Naive thymus-derived CD4-positive, alpha-beta T cell (primary cell): ENCODE measurements at regions of chr13 and their contacts with region 1.

Region 1: GRCh38 chr13:44917589-44918325 is 71.5 kb downstream of the NUFIP1 start:
- DNase-seq: peak; percentile 95 to 98 (median 97)
- ATAC-seq: peak; percentile 85
- H3K4me3 ChIP-seq: peak overlapping the region; percentile 89
- H3K4me3 Mint-ChIP-seq: no peak overlapping the region
- H3K27ac ChIP-seq: peak overlapping the region; percentile 75
- H3K27ac Mint-ChIP-seq: no peak overlapping the region
- H3K4me1 ChIP-seq: peaks cover 5 to 9% of the 10 kb centered on the region in 2 donors
- H3K4me1 Mint-ChIP-seq: peaks cover 2 to 19% (median 7%) of the 10 kb centered on the region in 7 donors
- H3K27me3 ChIP-seq: no peaks in the 10 kb centered on the region
- H3K27me3 Mint-ChIP-seq: peaks cover 0 to 4% (median 0%) of the 10 kb centered on the region in 5 donors

Region 2: DNA sequence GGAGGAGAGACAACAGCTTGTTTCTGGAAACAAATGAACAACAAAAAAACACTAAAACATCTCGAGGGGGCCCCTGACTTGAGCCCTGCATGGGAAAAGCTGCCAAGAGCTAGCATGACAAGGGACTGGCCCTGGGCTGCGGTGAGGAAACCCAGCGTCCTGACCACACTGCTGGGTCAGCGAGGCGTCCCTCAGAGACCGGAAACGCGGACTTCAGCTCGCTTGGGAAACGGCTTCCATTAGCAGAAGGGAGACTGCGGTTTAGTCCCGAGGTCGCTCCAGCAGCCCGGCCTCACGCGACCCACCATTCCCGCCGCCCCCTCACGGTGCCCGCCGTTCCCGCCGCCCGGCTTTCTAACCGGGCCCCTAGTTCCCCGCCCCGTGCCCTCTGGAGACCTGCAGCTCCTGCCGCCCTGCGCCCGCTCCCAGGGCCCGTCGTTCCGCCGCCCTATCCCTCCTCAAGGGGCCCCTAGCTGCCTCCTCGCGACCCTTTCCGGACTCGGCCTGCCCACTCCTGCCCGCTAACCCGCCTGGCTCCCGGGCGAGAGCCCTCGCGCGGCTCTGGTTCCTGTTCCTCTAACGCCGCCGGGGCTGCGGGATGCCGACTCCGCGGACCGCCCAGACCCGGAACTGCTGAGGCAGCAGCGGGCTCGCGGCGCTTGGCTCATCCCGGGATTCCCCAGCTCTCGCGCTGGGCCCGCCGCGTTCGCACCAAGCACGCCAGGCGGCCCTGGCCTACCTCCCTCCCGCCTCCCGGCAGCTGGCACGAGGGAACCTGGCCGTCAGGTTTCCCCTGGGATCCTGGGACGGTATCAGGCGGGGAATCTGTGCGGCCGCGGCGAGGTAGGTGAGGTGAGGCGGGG is 1038.6 kb before region 1 on chr13 and contains the start of gene CCDC122:
- CTCF ChIA-PET with region 1: no interaction called
- POLR2A ChIA-PET with region 1: no interaction called
- intact Hi-C with region 1: loop called (anchors 2 to 5 kb)
- DNase-seq: peak; percentile 44 to 81 (median 65)
- ATAC-seq: peak; percentile 91
- H3K4me3 ChIP-seq: peak within 1 kb of the TSS; percentile 60
- H3K4me3 Mint-ChIP-seq: peak within 1 kb of the TSS; percentile 82 to 93 (median 90)
- H3K27ac ChIP-seq: peak within 1 kb of the TSS; percentile 72
- H3K27ac Mint-ChIP-seq: peak within 1 kb of the TSS; percentile 53 to 90 (median 81)
- H3K4me1 ChIP-seq: peaks cover 0 to 9% of the 10 kb centered on the region in 2 donors
- H3K4me1 Mint-ChIP-seq: peaks cover 15 to 27% (median 23%) of the 10 kb centered on the region in 7 donors
- H3K27me3 ChIP-seq: no peaks in the 10 kb centered on the region
- H3K27me3 Mint-ChIP-seq: peaks cover 0 to 33% (median 3%) of the 10 kb centered on the region in 5 donors
- total RNA-seq, gene CCDC122: 1.1 to 2.3 (median 1.4) TPM

Region 3: DNA sequence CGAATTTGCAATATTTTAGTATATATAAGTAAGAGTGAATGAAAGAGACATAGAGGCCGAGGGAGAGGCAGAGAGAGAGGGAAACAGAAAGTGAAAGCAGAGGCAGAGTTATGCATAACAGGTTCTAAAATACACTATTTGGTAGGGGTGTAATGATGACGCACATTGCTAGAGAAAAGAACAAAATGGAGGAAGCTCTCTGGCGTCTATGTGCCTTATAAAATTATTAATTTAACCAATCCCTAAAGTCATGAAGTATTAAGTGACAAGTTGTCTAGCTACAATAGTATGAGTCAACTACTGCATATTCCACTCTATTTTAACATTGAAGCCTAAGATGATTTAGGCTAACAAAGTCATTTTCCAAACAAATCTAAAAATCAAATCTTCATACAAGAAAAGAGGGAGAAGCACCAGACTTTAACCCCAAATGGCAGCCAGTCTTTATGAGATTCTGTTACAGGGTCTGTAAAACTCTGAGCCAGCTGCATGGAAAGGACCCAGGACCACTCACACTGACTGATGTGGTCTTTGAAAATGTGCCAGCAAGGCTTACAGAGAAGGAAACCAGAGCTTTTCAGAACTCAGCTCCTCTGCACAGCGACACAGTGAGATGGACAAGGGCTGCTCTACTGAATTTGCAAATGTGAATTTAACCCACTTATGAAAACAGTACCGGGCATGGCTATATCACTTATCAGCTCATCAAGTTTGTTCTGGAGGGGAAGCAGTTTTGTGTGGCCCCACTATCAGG is 643.1 kb before region 1 on chr13:
- CTCF ChIA-PET with region 1: interaction called, 5 read pairs
- POLR2A ChIA-PET with region 1: interaction called, 3 read pairs
- intact Hi-C with region 1: loop called (anchors 1 to 2 kb)
- DNase-seq: peak in 7 of 9 donors; percentile 69 to 85 (median 82)
- ATAC-seq: peak; percentile 96
- H3K4me3 ChIP-seq: peak overlapping the region; percentile 49
- H3K4me3 Mint-ChIP-seq: peak overlapping the region; percentile 66 to 81 (median 78)
- H3K27ac ChIP-seq: peak overlapping the region; percentile 73
- H3K27ac Mint-ChIP-seq: peak overlapping the region; percentile 90 to 99 (median 96)
- H3K4me1 ChIP-seq: peaks cover 15 to 26% of the 10 kb centered on the region in 2 donors
- H3K4me1 Mint-ChIP-seq: peaks cover 18 to 71% (median 51%) of the 10 kb centered on the region in 7 donors
- H3K27me3 ChIP-seq: no peaks in the 10 kb centered on the region
- H3K27me3 Mint-ChIP-seq: no peaks in the 10 kb centered on the region

Region 4: GRCh38 chr13:44768239-44768638 is 149.5 kb before region 1 on chr13:
- CTCF ChIA-PET with region 1: no interaction called
- POLR2A ChIA-PET with region 1: no interaction called
- intact Hi-C with region 1: loop called in 1 of 2 experiments (anchors 2 kb)
- DNase-seq: peak in 3 of 9 donors; percentile 5 to 30 (median 23)
- ATAC-seq: peak; percentile 74
- H3K4me3 ChIP-seq: no peak overlapping the region
- H3K4me3 Mint-ChIP-seq: peak overlapping the region in 3 of 10 donors; percentile 2 to 60 (median 27)
- H3K27ac ChIP-seq: no peak overlapping the region
- H3K27ac Mint-ChIP-seq: peak overlapping the region in 4 of 9 donors; percentile 1 to 83 (median 15)
- H3K4me1 ChIP-seq: peaks cover 0 to 4% of the 10 kb centered on the region in 2 donors
- H3K4me1 Mint-ChIP-seq: peaks cover 12 to 39% (median 16%) of the 10 kb centered on the region in 7 donors
- H3K27me3 ChIP-seq: no peaks in the 10 kb centered on the region
- H3K27me3 Mint-ChIP-seq: peaks cover 0 to 9% (median 0%) of the 10 kb centered on the region in 5 donors

Region 5: GRCh38 chr13:45119991-45120864 is 202.5 kb after region 1 on chr13 and contains the start of gene GTF2F2:
- CTCF ChIA-PET with region 1: no interaction called
- POLR2A ChIA-PET with region 1: no interaction called
- intact Hi-C with region 1: loop called (anchors 1 kb)
- DNase-seq: peak; percentile 81 to 89 (median 86)
- ATAC-seq: peak; percentile 80
- H3K4me3 ChIP-seq: peak within 1 kb of the TSS; percentile 80
- H3K4me3 Mint-ChIP-seq: no peak within 1 kb of the TSS
- H3K27ac ChIP-seq: peak within 1 kb of the TSS; percentile 91
- H3K27ac Mint-ChIP-seq: no peak within 1 kb of the TSS
- H3K4me1 ChIP-seq: peaks cover 16 to 21% of the 10 kb centered on the region in 2 donors
- H3K4me1 Mint-ChIP-seq: peaks cover 6 to 17% (median 13%) of the 10 kb centered on the region in 7 donors
- H3K27me3 ChIP-seq: no peaks in the 10 kb centered on the region
- H3K27me3 Mint-ChIP-seq: no peaks in the 10 kb centered on the region
- total RNA-seq, gene GTF2F2: 13.7 to 20.4 (median 15.2) TPM

Region 6: GRCh38 chr13:45406421-45406820 is 488.7 kb after region 1 on chr13:
- CTCF ChIA-PET with region 1: no interaction called
- POLR2A ChIA-PET with region 1: no interaction called
- intact Hi-C with region 1: no loop called
- DNase-seq: no peak
- ATAC-seq: no peak
- H3K4me3 ChIP-seq: no peak overlapping the region
- H3K4me3 Mint-ChIP-seq: no peak overlapping the region
- H3K27ac ChIP-seq: no peak overlapping the region
- H3K27ac Mint-ChIP-seq: peak overlapping the region in 6 of 9 donors; percentile 32 to 77 (median 54)
- H3K4me1 ChIP-seq: no peaks in the 10 kb centered on the region
- H3K4me1 Mint-ChIP-seq: peaks cover 6 to 21% (median 12%) of the 10 kb centered on the region in 7 donors
- H3K27me3 ChIP-seq: no peaks in the 10 kb centered on the region
- H3K27me3 Mint-ChIP-seq: no peaks in the 10 kb centered on the region

Region 7: DNA sequence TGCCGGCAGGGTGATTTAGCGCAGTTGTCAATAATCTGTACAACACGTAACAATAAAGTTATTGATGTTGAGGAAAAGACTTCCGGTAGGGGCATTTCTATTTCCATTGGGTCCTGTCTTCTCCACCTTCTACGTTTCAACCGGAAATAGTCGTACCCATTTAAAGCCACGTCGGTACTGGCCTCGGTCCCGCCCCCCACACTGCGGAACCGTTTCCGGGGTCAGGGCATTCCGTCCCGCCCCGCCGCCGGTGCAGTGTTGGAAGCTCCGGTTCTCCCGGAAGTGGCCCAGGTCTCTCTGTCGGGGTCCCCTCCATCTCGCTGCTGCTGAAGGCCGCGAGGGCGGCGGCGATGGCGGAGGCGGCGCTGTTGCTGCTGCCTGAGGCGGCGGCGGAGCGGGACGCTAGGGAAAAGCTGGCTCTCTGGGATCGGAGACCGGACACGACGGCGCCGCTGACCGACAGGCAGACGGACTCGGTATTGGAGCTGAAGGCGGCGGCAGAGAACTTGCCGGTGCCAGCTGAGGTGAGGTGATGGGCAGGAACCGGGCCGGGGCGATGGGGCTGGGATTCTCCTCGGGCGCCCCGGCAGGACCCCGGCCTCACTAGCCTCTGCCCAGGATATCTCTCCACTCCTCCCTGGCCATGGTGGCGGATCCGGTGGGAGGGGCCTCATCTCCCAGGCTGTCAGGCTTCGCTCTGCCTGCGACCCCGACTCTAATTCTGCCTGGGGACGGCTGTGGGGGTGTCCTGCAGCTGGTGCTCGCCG is 547.1 kb after region 1 on chr13 and contains the start of gene COG3:
- CTCF ChIA-PET with region 1: no interaction called
- POLR2A ChIA-PET with region 1: no interaction called
- intact Hi-C with region 1: loop called in 1 of 2 experiments (anchors 1 kb)
- DNase-seq: peak; percentile 87 to 97 (median 96)
- ATAC-seq: peak; percentile 98
- H3K4me3 ChIP-seq: peak within 1 kb of the TSS; percentile 49
- H3K4me3 Mint-ChIP-seq: peak within 1 kb of the TSS; percentile 90 to 97 (median 95)
- H3K27ac ChIP-seq: peak within 1 kb of the TSS; percentile 92
- H3K27ac Mint-ChIP-seq: peak within 1 kb of the TSS; percentile 81 to 98 (median 94)
- H3K4me1 ChIP-seq: peaks cover 10 to 28% of the 10 kb centered on the region in 2 donors
- H3K4me1 Mint-ChIP-seq: peaks cover 33 to 74% (median 59%) of the 10 kb centered on the region in 7 donors
- H3K27me3 ChIP-seq: no peaks in the 10 kb centered on the region
- H3K27me3 Mint-ChIP-seq: no peaks in the 10 kb centered on the region
- total RNA-seq, gene COG3: 29.7 to 50.1 (median 43.4) TPM

Region 8: GRCh38 chr13:45974500-45974899 is 1056.7 kb after region 1 on chr13:
- CTCF ChIA-PET with region 1: no interaction called
- POLR2A ChIA-PET with region 1: no interaction called
- intact Hi-C with region 1: no loop called
- DNase-seq: no peak
- ATAC-seq: no peak
- H3K4me3 ChIP-seq: no peak overlapping the region
- H3K4me3 Mint-ChIP-seq: no peak overlapping the region
- H3K27ac ChIP-seq: no peak overlapping the region
- H3K27ac Mint-ChIP-seq: peak overlapping the region in 1 of 9 donors; percentile 63
- H3K4me1 ChIP-seq: no peaks in the 10 kb centered on the region
- H3K4me1 Mint-ChIP-seq: peaks cover 0 to 18% (median 6%) of the 10 kb centered on the region in 7 donors
- H3K27me3 ChIP-seq: no peaks in the 10 kb centered on the region
- H3K27me3 Mint-ChIP-seq: no peaks in the 10 kb centered on the region